CD4-positive, alpha-beta T cell (primary cell): ENCODE measurements at regions of chr11 and their contacts with region 1.

Region 1: DNA sequence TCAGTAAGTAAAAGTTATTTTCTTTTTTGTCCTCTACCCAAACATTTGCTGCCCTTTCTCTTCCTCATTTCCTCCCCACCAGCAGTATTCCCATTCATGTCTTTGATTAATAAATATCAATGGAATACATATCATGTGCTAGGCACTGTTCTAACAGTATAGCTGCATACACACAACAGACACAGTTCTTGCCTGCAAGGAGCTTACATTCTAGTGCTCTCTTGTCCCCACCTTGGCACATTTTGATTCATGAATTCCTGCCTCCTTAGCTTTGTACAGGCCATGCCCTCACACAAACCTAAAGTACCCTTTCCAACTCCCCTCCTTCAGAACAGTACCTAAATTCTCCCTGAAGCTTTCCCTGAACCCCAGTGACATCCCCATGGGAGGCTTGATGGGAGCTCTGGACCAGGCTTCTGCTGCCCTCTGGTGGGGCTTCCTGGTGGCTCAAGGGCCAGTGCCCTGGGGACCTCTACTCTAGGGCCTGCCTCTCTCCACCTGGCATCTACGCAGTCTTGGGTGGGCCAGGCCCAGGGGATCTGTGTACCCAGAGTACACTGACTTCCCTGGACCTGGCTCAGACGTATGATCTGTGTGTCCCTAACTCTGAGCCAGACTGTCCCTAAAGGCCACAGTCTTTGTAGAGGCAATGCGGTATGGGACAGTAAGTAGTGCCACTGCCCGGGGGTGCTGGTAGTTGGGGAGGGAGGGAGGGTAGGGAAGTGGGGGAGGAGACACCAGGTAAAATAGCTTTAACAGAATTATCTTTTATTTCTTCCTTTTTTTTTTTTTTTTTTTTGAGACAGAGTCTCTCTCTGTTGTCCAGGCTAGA is 14.1 kb downstream of the RPS13 start:
- DNase-seq: peak in 10 of 14 experiments; percentile 7 to 59 (median 22)
- ATAC-seq: peak; percentile 39
- H3K4me3 ChIP-seq: no peak overlapping the region
- H3K4me3 Mint-ChIP-seq: no peak overlapping the region
- H3K27ac ChIP-seq: no peak overlapping the region
- H3K27ac Mint-ChIP-seq: no peak overlapping the region
- H3K4me1 ChIP-seq: no peaks in the 10 kb centered on the region
- H3K4me1 Mint-ChIP-seq: no peaks in the 10 kb centered on the region
- H3K27me3 ChIP-seq: no peaks in the 10 kb centered on the region
- H3K27me3 Mint-ChIP-seq: no peaks in the 10 kb centered on the region
- CTCF ChIP-seq: no peak

Region 2: DNA sequence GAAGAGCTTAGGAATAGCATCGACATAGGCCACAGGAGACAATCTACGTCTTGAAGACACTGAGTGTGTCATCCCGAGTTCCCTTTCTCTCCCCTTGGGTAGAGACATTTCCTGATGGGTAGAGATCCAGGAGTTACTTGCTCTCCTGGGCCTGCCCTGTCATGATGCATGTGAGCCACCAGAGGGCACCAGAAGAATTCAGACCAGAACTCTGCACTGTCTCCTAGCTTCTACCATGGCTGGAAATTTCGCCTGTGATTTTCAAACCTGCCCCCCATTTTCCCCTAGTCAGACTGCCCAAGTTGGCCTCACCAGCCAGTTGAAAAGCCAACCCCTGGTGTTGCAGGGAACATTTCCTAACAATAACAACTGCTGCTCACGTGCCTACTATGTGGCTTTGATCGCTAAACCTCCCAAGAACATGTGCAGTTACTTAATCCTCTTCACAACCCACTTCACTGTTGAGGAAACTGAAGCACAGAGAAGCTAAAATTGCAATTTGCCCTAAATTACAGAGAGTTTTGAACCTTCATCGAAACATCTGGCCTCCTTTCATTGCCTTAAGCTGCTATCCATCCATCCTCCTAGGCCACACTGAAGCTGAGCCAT is 277.8 kb before region 1 on chr11:
- CTCF ChIA-PET with region 1: no interaction called
- POLR2A ChIA-PET with region 1: no interaction called
- intact Hi-C with region 1: loop called in 1 of 2 experiments (anchors 10 kb)
- DNase-seq: peak; percentile 12 to 73 (median 38)
- ATAC-seq: peak; percentile 79
- H3K4me3 ChIP-seq: no peak overlapping the region
- H3K4me3 Mint-ChIP-seq: no peak overlapping the region
- H3K27ac ChIP-seq: no peak overlapping the region
- H3K27ac Mint-ChIP-seq: no peak overlapping the region
- H3K4me1 ChIP-seq: peaks cover 3% of the 10 kb centered on the region
- H3K4me1 Mint-ChIP-seq: no peaks in the 10 kb centered on the region
- H3K27me3 ChIP-seq: no peaks in the 10 kb centered on the region
- H3K27me3 Mint-ChIP-seq: no peaks in the 10 kb centered on the region
- CTCF ChIP-seq: peak; percentile 82

Region 3: GRCh38 chr11:16820324-16821092 is 242.9 kb before region 1 on chr11:
- CTCF ChIA-PET with region 1: no interaction called
- POLR2A ChIA-PET with region 1: no interaction called
- intact Hi-C with region 1: loop called (anchors 2 to 5 kb)
- DNase-seq: peak; percentile 25 to 69 (median 50)
- ATAC-seq: no peak
- H3K4me3 ChIP-seq: no peak overlapping the region
- H3K4me3 Mint-ChIP-seq: no peak overlapping the region
- H3K27ac ChIP-seq: no peak overlapping the region
- H3K27ac Mint-ChIP-seq: no peak overlapping the region
- H3K4me1 ChIP-seq: peaks cover 5% of the 10 kb centered on the region
- H3K4me1 Mint-ChIP-seq: peaks cover 10% of the 10 kb centered on the region
- H3K27me3 ChIP-seq: no peaks in the 10 kb centered on the region
- H3K27me3 Mint-ChIP-seq: no peaks in the 10 kb centered on the region
- CTCF ChIP-seq: peak; percentile 80

Region 4: DNA sequence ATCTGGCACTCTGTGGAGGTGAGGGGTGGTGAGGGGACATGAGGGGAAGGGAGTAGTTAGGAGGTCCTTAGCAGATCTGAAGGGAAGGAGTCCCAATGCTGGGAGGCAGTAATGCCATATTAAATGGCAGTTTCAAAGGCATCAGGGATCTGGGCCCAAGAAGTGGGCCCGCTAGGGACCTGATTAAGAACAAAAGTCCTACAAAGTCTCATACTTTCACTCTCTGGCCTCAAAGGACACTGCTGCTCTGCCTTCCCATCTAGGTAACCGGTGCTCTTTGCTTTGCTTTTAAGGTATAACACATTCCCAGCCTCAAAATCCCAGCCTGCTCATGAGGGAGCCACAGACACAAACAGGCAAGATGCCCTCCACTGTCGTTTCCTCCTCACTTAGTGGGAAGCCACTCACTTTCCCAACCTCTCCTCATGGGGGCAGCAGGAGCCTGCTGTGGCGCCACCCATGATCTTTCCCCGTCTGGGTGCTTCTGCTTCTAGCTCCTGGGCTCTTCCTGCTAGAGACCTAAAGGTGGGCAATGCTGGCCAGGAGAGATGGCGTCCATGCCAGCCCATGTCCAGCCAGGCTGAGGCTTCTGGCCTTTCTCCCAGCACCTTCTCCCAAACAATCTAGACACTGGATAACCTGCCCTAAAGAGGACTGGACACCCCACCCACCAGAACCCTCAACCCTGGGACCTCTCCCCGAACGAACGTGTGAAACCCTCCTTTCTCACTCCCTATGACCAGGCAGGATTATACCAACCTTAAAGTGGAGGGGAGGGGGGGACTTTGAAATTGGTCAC is 117.5 kb before region 1 on chr11:
- CTCF ChIA-PET with region 1: interaction called, 5 read pairs
- POLR2A ChIA-PET with region 1: no interaction called
- intact Hi-C with region 1: loop called in 1 of 2 experiments (anchors 5 kb)
- DNase-seq: peak in 6 of 14 experiments; percentile 2 to 54 (median 35)
- ATAC-seq: no peak
- H3K4me3 ChIP-seq: no peak overlapping the region
- H3K4me3 Mint-ChIP-seq: no peak overlapping the region
- H3K27ac ChIP-seq: no peak overlapping the region
- H3K27ac Mint-ChIP-seq: no peak overlapping the region
- H3K4me1 ChIP-seq: no peaks in the 10 kb centered on the region
- H3K4me1 Mint-ChIP-seq: no peaks in the 10 kb centered on the region
- H3K27me3 ChIP-seq: no peaks in the 10 kb centered on the region
- H3K27me3 Mint-ChIP-seq: no peaks in the 10 kb centered on the region
- CTCF ChIP-seq: no peak